ENCODE measurements at regions of chr1 and their contacts with region 1.

Region 1: DNA sequence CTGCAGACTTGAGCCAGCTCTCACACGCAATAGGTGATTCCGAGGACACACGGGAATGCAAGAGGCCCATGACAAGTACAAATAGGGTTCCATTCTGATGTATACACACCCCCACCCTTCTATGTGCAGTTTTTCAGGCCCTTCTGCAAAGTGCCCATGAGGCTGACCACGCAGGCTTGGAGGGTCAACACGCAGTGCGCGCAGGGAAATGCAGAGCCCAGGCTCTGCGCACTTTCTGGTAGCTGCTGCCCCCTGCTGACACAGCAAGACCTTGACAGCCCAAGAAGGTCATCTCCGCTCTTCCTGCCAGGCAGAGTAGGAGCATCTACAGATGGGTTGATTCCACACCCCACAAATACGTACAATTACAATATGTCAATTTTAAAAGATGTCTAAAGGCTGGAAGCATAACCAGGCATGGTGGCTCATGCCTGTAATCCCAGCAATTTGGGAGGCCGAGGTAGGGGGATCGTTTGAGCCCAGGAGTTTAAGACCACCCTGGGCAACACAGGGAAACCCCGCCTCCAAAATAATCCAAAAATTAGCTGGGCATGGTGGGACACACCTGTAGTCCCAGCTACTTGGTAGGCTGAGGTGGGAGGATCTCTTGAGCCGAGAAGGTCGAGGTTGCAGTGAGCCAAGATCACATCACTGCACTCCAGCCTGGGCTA is 18.5 kb downstream of the SH3BP5L start:
- DNase-seq: peak; percentile 60
- H3K4me3 Mint-ChIP-seq: no peak overlapping the region
- H3K27ac Mint-ChIP-seq: no peak overlapping the region
- H3K4me1 Mint-ChIP-seq: no peaks in the 10 kb centered on the region
- H3K27me3 Mint-ChIP-seq: no peaks in the 10 kb centered on the region

Region 2: GRCh38 chr1:248277876-248278275 is 529.3 kb before region 1 on chr1 and contains the start of gene OR2T33:
- CTCF ChIA-PET with region 1: no interaction called
- POLR2A ChIA-PET with region 1: no interaction called
- DNase-seq: no peak
- H3K4me3 Mint-ChIP-seq: no peak within 1 kb of the TSS
- H3K27ac Mint-ChIP-seq: no peak within 1 kb of the TSS
- H3K4me1 Mint-ChIP-seq: no peaks in the 10 kb centered on the region
- H3K27me3 Mint-ChIP-seq: no peaks in the 10 kb centered on the region
- total RNA-seq, gene OR2T33: not detected

Region 3: DNA sequence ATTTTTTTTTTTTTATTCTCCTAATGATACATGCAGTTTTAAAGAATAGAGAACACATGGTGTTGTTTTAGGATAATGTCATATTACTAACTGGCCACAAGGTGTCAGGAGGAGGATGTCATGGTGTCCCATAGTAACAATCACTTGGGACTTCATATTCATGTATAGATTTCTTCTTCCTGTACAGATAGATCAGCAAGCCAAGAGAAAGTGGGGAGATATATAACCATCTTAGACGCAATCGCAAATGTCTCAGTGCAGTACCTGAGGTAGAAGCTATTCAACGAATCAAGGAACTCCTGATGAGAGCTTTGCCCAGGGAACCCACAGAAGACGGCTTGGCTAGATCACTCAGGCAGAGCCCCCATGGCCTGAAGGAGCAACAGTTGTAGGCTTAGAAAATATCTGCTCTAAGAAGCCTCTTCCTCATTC is 184.6 kb before region 1 on chr1:
- CTCF ChIA-PET with region 1: interaction called, 16 read pairs
- POLR2A ChIA-PET with region 1: no interaction called
- DNase-seq: no peak
- H3K4me3 Mint-ChIP-seq: no peak overlapping the region
- H3K27ac Mint-ChIP-seq: no peak overlapping the region
- H3K4me1 Mint-ChIP-seq: no peaks in the 10 kb centered on the region
- H3K27me3 Mint-ChIP-seq: peaks cover 2% of the 10 kb centered on the region

Measured in activated CD4-positive, alpha-beta memory T cell treated with anti-CD3 and anti-CD28 coated beads, Interleukin-2, amount 10 ng/mL, durations not matched to agents 7 days and 5 days (primary cell).